Prostate gland (tissue), 2 donors: ENCODE measurements at regions of chr1 and their contacts with region 1.

Region 1: DNA sequence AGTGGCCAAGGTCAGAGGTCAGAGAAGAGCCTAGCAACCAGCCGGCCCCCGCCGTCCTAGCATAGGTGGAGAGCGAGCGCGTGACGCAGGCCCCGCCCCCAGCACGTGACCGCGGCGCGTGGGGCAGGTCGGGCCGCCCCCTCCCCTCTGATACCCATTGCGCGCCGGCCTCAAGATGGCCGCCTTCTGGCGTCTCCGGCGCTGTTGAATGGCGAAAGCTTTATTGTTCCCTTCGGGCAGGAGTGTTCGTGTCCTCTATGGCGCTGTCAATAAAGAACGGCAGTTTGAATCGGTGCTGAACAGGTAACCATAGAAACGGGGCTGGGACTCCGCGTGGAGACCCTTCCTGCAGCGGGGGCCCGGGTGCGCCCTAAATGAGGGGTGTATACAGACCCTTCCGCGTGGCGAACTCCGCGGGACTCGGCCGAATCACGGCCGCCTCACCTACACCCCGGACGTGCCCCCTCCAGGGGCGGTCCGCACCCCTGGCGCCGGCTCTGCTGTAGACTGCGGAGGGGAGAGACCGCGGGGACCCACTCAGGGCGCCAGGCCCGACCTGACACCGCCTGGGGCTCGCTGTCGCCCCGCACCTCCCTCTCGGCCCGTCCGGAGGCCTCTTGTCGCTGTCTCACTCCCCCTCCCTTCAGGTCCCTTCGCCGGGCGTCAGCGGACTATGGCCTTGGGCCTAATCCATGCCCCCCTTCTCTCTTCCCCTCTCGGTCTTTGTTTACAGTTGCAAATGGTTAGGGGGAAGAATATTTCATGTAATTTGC is at the start of gene ZBTB40:
- DNase-seq: peak; percentile 93
- H3K4me3 ChIP-seq: peak within 1 kb of the TSS; percentile 71 to 96
- H3K27ac ChIP-seq: peak within 1 kb of the TSS; percentile 96 to 98
- H3K4me1 ChIP-seq: no peaks in the 10 kb centered on the region
- H3K27me3 ChIP-seq: no peaks in the 10 kb centered on the region
- CTCF ChIP-seq: peak in 2 of 4 experiments; percentile 2 to 17
- POLR2A ChIP-seq: peak; percentile 33
- total RNA-seq, gene ZBTB40: 18.2 to 26.3 TPM

Region 2: GRCh38 chr1:22285549-22286396 is 166.1 kb before region 1 on chr1:
- intact Hi-C with region 1: no loop called
- DNase-seq: no peak
- H3K4me3 ChIP-seq: no peak overlapping the region
- H3K27ac ChIP-seq: no peak overlapping the region
- H3K4me1 ChIP-seq: no peaks in the 10 kb centered on the region
- H3K27me3 ChIP-seq: no peaks in the 10 kb centered on the region
- CTCF ChIP-seq: no peak
- POLR2A ChIP-seq: no peak

Region 3: GRCh38 chr1:22494943-22495579 is 43.2 kb after region 1 on chr1:
- intact Hi-C with region 1: loop called (anchors 5 kb)
- DNase-seq: no peak
- H3K4me3 ChIP-seq: no peak overlapping the region
- H3K27ac ChIP-seq: no peak overlapping the region
- H3K4me1 ChIP-seq: no peaks in the 10 kb centered on the region
- H3K27me3 ChIP-seq: no peaks in the 10 kb centered on the region
- CTCF ChIP-seq: no peak
- POLR2A ChIP-seq: no peak

Region 4: DNA sequence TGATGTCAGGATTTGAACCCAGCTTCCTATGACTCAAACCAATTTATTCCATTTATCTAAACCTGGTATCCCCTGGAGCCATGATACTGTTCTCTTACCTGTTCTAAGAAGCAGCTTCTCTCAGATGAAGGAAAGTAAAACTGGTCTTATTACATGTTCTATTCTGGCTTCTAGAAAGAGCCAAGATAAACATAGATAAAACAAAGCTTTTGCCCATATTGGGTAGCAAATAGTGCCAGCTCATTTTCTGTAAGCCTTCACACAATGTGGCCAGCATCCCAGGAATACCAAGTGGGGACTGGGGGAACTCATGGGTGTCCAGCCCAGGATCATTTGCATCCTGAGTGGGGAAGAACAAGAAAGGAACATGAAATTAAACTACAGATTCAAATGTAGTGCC is 57.9 kb after region 1 on chr1:
- intact Hi-C with region 1: loop called (anchors 5 kb)
- DNase-seq: no peak
- H3K4me3 ChIP-seq: no peak overlapping the region
- H3K27ac ChIP-seq: peak overlapping the region; percentile 59 to 67
- H3K4me1 ChIP-seq: peaks cover 4% of the 10 kb centered on the region
- H3K27me3 ChIP-seq: no peaks in the 10 kb centered on the region
- CTCF ChIP-seq: no peak
- POLR2A ChIP-seq: no peak